ENCODE measurements at regions of chr20 and their contacts with region 1.

Region 1: DNA sequence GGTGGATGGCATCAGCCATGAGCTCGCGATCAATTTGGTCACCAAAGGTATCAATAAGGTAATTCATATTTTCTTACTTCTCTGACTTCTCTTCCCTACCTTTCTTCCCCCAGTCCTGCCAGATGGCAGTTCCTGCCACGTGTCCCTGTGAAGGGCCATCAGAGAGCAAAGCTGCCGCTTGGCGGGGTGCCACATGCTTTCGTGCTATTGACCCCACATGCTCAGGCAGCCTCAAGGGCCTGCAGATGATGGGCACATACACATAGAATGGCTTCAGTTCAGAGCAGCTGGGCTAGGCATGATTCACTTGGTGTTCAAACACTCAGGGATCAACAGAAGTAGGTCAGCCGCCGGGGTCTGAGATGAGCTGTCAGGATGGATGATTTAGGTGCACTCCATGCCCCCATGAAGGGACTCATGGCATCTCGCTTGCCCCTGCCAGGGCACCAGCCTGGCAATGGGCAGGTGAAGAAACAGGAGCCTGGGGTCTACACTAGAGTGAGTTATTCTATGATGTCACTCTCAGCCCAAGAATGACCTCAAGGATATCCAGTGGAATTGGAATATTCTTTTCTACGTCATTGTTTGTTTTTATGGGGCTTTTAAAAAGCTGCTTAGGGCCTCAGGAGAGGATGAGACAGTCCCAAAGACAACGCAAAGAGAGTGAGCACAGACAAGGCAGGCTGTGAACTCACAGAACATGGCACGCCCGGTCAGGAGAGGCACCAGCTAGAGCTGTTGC is 25.5 kb downstream of the BANF2 start:
- DNase-seq: no peak
- ATAC-seq: no peak
- H3K4me3 Mint-ChIP-seq: no peak overlapping the region
- H3K27ac Mint-ChIP-seq: no peak overlapping the region
- H3K4me1 Mint-ChIP-seq: no peaks in the 10 kb centered on the region
- H3K27me3 Mint-ChIP-seq: peaks cover 10% of the 10 kb centered on the region
- CTCF ChIP-seq: no peak

Region 2: DNA sequence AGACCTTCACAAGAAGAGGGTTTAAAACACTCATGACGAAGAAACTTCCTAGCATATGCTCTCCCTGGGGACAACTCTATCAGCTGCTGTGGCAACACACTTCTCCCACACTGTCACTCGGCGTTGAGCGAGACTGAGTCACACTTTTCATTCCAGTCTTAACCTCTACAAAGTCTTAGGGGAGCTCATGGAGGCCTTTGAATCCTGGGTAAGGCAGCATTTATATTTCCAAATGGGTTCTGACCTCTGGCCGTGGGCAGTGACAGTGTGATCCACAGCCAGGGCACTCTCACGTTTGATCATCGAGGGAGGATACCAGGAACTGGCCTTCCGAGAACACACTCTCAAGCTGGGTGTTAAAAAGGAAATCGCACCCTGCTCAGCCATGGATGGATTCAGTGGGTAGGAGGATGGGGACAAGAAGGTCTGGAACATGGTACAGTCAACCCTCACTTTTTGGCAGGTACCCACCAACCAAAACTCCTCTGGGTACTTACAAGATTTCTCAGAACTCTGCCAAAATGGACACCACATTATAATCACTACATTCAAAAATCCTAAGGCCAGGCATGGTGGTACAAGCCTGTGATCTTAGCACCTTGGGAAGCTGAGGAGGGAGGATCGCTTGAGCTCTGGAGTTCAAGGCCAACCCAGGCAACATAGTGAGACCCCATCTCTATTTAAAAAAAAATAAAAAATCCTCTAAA is 62.8 kb before region 1 on chr20:
- CTCF ChIA-PET with region 1: no interaction called
- POLR2A ChIA-PET with region 1: no interaction called
- intact Hi-C with region 1: no loop called
- DNase-seq: no peak
- ATAC-seq: peak; percentile 73
- H3K4me3 Mint-ChIP-seq: no peak overlapping the region
- H3K27ac Mint-ChIP-seq: no peak overlapping the region
- H3K4me1 Mint-ChIP-seq: peaks cover 26% of the 10 kb centered on the region
- H3K27me3 Mint-ChIP-seq: no peaks in the 10 kb centered on the region
- CTCF ChIP-seq: no peak

Region 3: GRCh38 chr20:17798581-17798980 is 73.3 kb after region 1 on chr20:
- CTCF ChIA-PET with region 1: no interaction called
- POLR2A ChIA-PET with region 1: no interaction called
- intact Hi-C with region 1: loop called (anchors 2 kb)
- DNase-seq: no peak
- ATAC-seq: no peak
- H3K4me3 Mint-ChIP-seq: no peak overlapping the region
- H3K27ac Mint-ChIP-seq: no peak overlapping the region
- H3K4me1 Mint-ChIP-seq: no peaks in the 10 kb centered on the region
- H3K27me3 Mint-ChIP-seq: peaks cover 10% of the 10 kb centered on the region
- CTCF ChIP-seq: no peak